ENCODE measurements at regions of chr6 and their contacts with region 1.

Region 1: DNA sequence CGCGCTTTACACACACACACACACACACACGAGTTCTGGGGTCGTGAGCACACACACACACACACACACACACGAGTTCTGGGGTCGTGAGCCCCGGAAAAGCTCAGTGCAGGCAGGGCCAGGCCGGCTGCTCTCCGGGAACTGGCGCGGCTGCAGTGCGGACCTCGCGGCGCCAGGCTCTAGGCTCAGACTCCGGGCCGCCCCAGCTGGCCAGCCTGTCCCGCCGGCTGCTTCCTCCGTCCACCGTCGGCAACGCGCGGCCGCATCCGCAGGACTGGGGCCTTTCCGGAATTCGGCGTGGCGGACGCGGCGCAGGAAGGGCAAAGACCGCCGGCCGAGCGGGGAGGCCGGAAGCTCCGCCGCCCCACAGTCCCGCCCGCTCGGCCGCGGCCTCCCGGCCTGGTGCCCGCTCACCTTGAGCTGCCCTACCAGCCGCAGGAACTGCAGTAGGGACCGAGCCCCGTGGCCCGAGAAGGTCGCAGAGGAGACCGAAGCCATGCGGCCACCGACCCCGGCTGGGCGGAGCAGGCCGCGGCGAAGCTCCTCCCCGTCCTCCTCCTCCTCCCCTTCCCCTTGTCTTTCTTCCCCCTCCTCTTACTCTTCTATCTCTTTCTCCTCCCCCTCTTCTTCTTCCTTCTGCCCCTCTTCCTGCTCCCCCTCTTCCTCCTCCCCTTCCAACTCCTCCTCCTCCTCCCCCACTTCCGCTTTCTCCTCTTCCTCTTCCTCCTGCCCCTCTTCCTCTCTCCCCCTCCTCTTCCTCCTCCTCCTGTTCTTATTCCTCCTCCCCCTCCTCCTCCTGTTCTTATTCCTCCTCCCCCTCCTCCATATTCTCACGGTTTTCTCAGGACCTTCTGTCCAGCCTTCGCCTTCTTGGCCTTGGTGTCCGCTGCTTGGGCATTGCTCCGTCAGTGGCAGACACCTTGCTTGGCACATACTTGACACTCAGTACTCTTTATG is at the start of gene HDDC2:
- DNase-seq: peak; percentile 53
- ATAC-seq: peak; percentile 78
- H3K4me3 Mint-ChIP-seq: peak within 1 kb of the TSS; percentile 89
- H3K27ac Mint-ChIP-seq: peak within 1 kb of the TSS; percentile 78
- H3K4me1 Mint-ChIP-seq: peaks cover 38% of the 10 kb centered on the region
- H3K27me3 Mint-ChIP-seq: peaks cover 14% of the 10 kb centered on the region
- CTCF ChIP-seq: no peak
- total RNA-seq, gene HDDC2: 53.1 and 55.8 TPM in 2 replicates

Region 2: GRCh38 chr6:125095580-125096301 is 206.0 kb before region 1 on chr6:
- CTCF ChIA-PET with region 1: no interaction called
- POLR2A ChIA-PET with region 1: no interaction called
- intact Hi-C with region 1: no loop called
- DNase-seq: no peak
- ATAC-seq: no peak
- H3K4me3 Mint-ChIP-seq: no peak overlapping the region
- H3K27ac Mint-ChIP-seq: no peak overlapping the region
- H3K4me1 Mint-ChIP-seq: peaks cover 5% of the 10 kb centered on the region
- H3K27me3 Mint-ChIP-seq: peaks cover 14% of the 10 kb centered on the region
- CTCF ChIP-seq: no peak

Region 3: GRCh38 chr6:125325586-125325985 is 23.9 kb after region 1 on chr6:
- CTCF ChIA-PET with region 1: no interaction called
- POLR2A ChIA-PET with region 1: no interaction called
- intact Hi-C with region 1: no loop called
- DNase-seq: no peak
- ATAC-seq: no peak
- H3K4me3 Mint-ChIP-seq: no peak overlapping the region
- H3K27ac Mint-ChIP-seq: no peak overlapping the region
- H3K4me1 Mint-ChIP-seq: no peaks in the 10 kb centered on the region
- H3K27me3 Mint-ChIP-seq: peaks cover 8% of the 10 kb centered on the region
- CTCF ChIP-seq: no peak

Region 4: DNA sequence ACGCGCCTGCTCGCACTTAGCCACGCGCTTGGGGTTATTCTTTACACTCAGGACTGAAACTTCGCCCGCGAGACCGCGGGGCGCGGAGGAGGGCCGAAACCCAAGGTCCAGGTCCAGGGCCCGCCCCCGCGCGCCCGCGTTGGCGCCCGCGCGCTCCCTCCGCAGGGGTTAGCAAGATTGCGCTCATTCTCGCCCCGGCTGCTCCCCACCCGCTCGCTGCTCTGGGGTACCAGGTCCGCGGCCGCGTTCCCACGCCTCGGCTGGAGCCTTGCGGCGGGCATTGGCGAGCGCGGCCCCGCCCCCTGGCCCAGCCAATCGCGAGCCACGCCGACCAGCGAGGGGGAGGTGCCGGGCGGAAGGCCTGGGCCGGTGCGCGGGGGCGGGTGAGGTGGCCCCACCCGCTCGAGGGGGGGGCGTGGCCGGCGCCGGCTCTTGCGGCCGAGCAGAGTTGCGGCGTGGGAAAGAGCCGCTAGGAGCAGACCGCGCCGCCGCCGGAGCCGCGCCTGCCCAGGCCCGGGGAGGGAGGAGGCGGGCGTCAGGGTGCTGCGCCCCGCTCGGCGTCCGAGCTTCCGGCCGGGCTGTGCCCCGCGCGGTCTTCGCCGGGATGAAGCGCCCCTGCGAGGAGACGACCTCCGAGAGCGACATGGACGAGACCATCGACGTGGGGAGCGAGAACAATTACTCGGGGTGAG is 447.6 kb after region 1 on chr6 and contains the start of gene HEY2:
- CTCF ChIA-PET with region 1: interaction called, 14 read pairs
- POLR2A ChIA-PET with region 1: interaction called, 4 read pairs
- intact Hi-C with region 1: loop called (anchors 1 kb)
- DNase-seq: peak; percentile 92
- ATAC-seq: peak; percentile 91
- H3K4me3 Mint-ChIP-seq: peak within 1 kb of the TSS; percentile 81
- H3K27ac Mint-ChIP-seq: peak within 1 kb of the TSS; percentile 61
- H3K4me1 Mint-ChIP-seq: peaks cover 40% of the 10 kb centered on the region
- H3K27me3 Mint-ChIP-seq: peaks cover 46% of the 10 kb centered on the region
- CTCF ChIP-seq: no peak
- total RNA-seq, gene HEY2: not detected in 2 replicates

Measured in activated B cell treated with CpG ODN at 0.5 μM for 24 hours (primary cell).